AG04449 (cell line): ENCODE measurements at regions of chr1 and their contacts with region 1.

Region 1: DNA sequence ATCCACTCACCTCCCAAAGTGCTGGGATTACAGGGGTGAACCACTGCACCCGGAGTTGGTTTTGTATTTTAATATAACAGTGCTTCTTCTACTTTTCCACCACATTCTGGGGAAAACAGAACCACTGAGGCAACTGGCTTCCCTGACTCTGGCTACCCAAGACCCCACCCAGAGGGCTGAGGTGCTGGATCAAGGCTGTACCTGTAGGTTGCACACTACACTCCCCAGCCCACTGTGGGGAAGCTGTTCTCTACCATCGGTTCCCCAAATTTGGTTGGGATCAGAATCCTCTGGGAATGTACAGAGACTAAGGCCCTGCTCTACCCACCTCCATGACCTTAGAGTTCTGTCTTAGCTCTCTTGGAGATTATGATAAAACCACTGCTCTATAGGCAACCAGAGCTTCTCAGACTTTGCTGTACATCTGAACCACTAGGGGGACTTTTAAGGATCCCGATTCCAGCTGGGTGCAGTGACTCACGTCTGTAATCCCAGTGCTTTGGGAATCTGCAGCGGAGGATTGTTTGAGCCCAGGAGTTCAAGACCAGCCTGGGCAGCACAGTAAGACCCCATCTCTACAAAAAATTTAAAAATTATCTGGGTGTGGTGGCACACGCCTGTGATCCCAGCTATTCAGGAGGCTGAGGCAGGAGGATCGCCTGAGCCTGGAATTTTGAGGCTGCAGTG is 51.6 kb downstream of the GNG4 start:
- DNase-seq: no peak
- H3K4me3 ChIP-seq: no peak overlapping the region
- CTCF ChIP-seq: peak; percentile 45

Region 2: DNA sequence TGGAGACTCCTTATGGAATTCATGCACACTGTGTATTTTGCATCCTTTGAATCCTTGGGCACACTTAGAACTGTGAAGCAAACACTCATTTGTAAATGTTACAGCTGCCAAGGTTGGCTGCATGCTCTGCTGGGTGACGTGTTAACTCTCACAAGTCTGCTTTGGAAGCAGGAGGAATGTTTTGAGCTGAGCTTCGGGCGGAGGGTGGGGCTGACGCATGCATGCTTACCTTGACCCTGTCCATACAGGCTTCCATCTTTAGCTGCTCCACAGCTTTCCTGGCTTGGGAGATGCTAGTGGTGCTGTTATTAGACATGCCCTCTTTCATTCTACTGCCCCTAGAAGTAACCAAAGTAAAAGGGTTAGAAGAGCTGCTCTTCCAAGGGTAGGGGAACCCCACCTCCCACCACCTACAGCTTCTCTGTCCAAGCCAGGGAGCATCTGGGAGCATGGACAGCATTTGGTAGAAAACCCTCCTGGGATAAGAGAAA is 14.5 kb before region 1 on chr1:
- CTCF ChIA-PET with region 1: interaction called, 28 read pairs
- POLR2A ChIA-PET with region 1: no interaction called
- DNase-seq: no peak
- H3K4me3 ChIP-seq: no peak overlapping the region
- CTCF ChIP-seq: no peak

Region 3: DNA sequence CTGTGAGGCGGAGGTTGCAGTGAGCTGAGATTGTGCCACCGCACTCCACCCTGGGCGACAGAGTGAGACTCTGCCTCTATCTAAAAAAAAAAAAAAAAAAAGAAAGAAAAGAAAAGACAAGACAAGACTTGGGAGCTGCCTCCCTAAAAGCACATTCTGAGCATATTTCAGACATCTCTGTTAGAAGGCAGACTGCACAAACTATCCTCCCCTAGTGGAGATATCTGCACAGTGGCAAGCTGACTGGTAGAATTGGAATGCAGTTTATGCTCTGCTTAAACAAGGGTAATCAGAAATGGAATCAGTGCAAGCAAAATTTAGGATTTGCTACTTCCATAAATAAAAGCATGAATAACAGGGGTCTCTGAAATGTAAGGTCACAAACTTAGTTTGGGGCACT is 19.8 kb after region 1 on chr1:
- CTCF ChIA-PET with region 1: interaction called, 114 read pairs
- POLR2A ChIA-PET with region 1: no interaction called
- DNase-seq: peak; percentile 57
- H3K4me3 ChIP-seq: no peak overlapping the region
- CTCF ChIP-seq: peak; percentile 73

Region 4: DNA sequence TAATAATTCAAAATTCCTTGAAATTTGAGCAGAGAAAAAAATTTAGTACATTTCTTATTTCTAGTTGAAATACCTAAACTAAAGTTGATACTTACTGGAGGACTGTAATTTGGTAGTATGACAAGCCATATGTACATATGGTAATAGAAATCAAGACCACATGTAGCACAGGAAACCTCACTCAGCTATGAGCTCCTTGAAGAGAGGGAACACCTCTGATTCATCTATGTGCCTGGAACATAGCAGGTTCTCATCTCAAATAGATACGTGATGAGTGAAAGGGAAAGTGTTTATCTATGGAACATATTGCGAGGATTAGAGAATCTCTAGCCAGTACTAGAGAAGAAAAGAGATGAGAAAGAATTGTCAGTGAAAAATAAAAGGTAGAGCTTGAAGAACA is 99.5 kb after region 1 on chr1:
- CTCF ChIA-PET with region 1: no interaction called
- POLR2A ChIA-PET with region 1: no interaction called
- DNase-seq: no peak
- H3K4me3 ChIP-seq: no peak overlapping the region
- CTCF ChIP-seq: no peak